AG04449 (cell line): ENCODE measurements at regions of chr2 and their contacts with region 1.

Region 1: DNA sequence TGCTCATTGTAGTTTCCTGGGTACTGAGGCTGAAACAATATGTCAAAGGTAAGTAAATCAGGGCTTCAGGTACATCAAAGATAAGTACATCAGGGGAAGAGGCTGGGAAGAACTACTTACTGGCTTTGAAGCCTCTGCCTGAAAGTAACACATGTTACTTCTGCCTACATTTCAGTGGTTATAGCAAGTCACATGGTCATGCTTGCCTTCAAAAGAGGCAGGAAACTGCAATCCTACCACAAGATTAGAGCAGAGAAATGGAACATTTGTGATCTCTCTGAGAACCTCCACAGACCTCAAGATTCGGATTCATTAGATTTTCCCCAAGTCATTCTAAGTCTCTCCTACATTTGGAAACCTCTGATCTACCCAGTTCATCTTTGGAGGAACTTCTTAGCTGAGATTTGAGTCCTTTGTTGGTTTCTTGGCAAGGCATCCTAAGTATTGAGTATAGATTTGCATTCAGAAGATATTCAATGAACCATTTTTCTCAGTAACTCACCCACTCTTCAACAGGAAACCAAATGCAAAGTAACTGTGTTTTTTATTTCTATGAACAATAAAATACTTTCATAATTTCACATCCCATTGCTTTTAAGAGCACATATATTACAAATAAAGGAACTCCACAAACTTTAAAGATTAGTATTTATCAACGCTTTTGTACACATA is 48.5 kb upstream of the CCDC195 start:
- DNase-seq: no peak
- H3K4me3 ChIP-seq: no peak overlapping the region
- CTCF ChIP-seq: no peak

Region 2: DNA sequence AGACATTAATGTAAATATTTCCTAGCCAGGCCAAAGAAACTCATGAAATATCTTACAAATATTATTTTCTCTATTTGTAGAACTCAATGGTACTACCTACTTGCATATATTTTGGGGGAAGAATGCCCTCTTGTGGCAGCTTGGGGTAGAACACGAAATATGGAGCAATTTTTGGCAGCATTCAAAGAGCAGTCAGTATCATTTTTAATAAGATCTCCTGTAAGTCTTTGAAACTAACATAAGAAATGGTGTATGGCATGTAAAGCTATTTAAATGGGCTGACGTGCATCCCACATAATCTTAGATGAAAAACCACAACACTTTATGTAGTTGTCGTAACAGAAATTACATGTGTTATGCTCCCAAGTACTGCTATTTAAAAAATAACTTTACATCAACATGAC is 13.8 kb after region 1 on chr2:
- CTCF ChIA-PET with region 1: interaction called, 62 read pairs
- POLR2A ChIA-PET with region 1: no interaction called
- DNase-seq: peak; percentile 33
- H3K4me3 ChIP-seq: no peak overlapping the region
- CTCF ChIP-seq: peak; percentile 71

Region 3: GRCh38 chr2:225434014-225434413 is 669.3 kb after region 1 on chr2:
- CTCF ChIA-PET with region 1: no interaction called
- POLR2A ChIA-PET with region 1: no interaction called
- DNase-seq: no peak
- H3K4me3 ChIP-seq: no peak overlapping the region
- CTCF ChIP-seq: no peak